T-cell (primary cell): ENCODE measurements at regions of chr1 and their contacts with region 1.

Region 1: GRCh38 chr1:35726450-35727433 is 8.1 kb upstream of the C1orf216 start:
- DNase-seq: peak in 30 of 35 experiments; percentile 12 to 81 (median 36)
- ATAC-seq: peak; percentile 85 to 90 (median 88)
- H3K4me3 ChIP-seq: no peak overlapping the region
- H3K4me3 Mint-ChIP-seq: no peak overlapping the region
- H3K27ac ChIP-seq: no peak overlapping the region
- H3K27ac Mint-ChIP-seq: no peak overlapping the region
- H3K4me1 ChIP-seq: peaks cover 0 to 7% of the 10 kb centered on the region in 2 experiments
- H3K4me1 Mint-ChIP-seq: peaks cover 4 to 7% (median 4%) of the 10 kb centered on the region in 3 donors
- H3K27me3 ChIP-seq: no peaks in the 10 kb centered on the region
- H3K27me3 Mint-ChIP-seq: no peaks in the 10 kb centered on the region

Region 2: GRCh38 chr1:35564037-35564883 is 162.5 kb before region 1 on chr1:
- CTCF ChIA-PET with region 1: interaction called, 3 to 16 read pairs
- POLR2A ChIA-PET with region 1: interaction called in 1 of 2 experiments, 4 read pairs
- DNase-seq: peak; percentile 48 to 89 (median 73)
- ATAC-seq: peak; percentile 61 to 76 (median 70)
- H3K4me3 ChIP-seq: no peak overlapping the region
- H3K4me3 Mint-ChIP-seq: peak overlapping the region in 1 of 3 donors; percentile 28
- H3K27ac ChIP-seq: no peak overlapping the region
- H3K27ac Mint-ChIP-seq: peak overlapping the region; percentile 56 to 76
- H3K4me1 ChIP-seq: peaks cover 0 to 16% of the 10 kb centered on the region in 2 experiments
- H3K4me1 Mint-ChIP-seq: peaks cover 40 to 47% (median 44%) of the 10 kb centered on the region in 3 donors
- H3K27me3 ChIP-seq: no peaks in the 10 kb centered on the region
- H3K27me3 Mint-ChIP-seq: no peaks in the 10 kb centered on the region

Region 3: GRCh38 chr1:35668506-35668905 is 58.2 kb before region 1 on chr1:
- CTCF ChIA-PET with region 1: no interaction called
- POLR2A ChIA-PET with region 1: no interaction called
- DNase-seq: no peak
- ATAC-seq: no peak
- H3K4me3 ChIP-seq: no peak overlapping the region
- H3K4me3 Mint-ChIP-seq: no peak overlapping the region
- H3K27ac ChIP-seq: no peak overlapping the region
- H3K27ac Mint-ChIP-seq: no peak overlapping the region
- H3K4me1 ChIP-seq: no peaks in the 10 kb centered on the region
- H3K4me1 Mint-ChIP-seq: no peaks in the 10 kb centered on the region
- H3K27me3 ChIP-seq: peaks cover 8 to 41% of the 10 kb centered on the region in 2 experiments
- H3K27me3 Mint-ChIP-seq: peaks cover 11 to 29% of the 10 kb centered on the region in 2 donors

Region 4: GRCh38 chr1:35715568-35716002 is 11.2 kb before region 1 on chr1:
- CTCF ChIA-PET with region 1: interaction called, 11 to 14 read pairs
- POLR2A ChIA-PET with region 1: no interaction called
- DNase-seq: peak; percentile 49 to 86 (median 71)
- ATAC-seq: peak; percentile 53 to 63 (median 56)
- H3K4me3 ChIP-seq: no peak overlapping the region
- H3K4me3 Mint-ChIP-seq: peak overlapping the region in 1 of 3 donors; percentile 39
- H3K27ac ChIP-seq: no peak overlapping the region
- H3K27ac Mint-ChIP-seq: no peak overlapping the region
- H3K4me1 ChIP-seq: peaks cover 3 to 40% of the 10 kb centered on the region in 2 experiments
- H3K4me1 Mint-ChIP-seq: peaks cover 31 to 42% (median 32%) of the 10 kb centered on the region in 3 donors
- H3K27me3 ChIP-seq: peaks cover 0 to 3% of the 10 kb centered on the region in 2 experiments
- H3K27me3 Mint-ChIP-seq: no peaks in the 10 kb centered on the region

Region 5: DNA sequence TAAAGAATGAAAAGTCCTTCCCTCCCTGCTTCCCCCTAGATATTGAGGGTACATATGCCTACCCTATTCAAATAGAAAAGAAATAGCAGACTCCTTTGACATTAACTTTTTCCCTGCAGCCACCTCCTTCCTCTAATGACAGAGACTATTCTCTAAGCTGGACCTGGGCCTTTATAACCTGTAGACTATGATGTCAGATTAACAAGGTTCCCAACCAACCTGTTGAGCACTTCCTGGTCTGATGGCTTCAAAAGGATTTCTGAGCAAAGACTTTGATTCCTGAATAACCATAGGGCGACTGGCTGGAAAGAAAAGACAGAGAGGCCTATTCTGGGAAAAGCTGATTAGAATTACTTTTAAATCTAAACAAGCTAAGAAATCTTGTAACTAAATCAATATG is 10.4 kb after region 1 on chr1:
- CTCF ChIA-PET with region 1: interaction called in 1 of 2 experiments, 10 read pairs
- POLR2A ChIA-PET with region 1: no interaction called
- DNase-seq: no peak
- ATAC-seq: no peak
- H3K4me3 ChIP-seq: no peak overlapping the region
- H3K4me3 Mint-ChIP-seq: no peak overlapping the region
- H3K27ac ChIP-seq: no peak overlapping the region
- H3K27ac Mint-ChIP-seq: peak overlapping the region in 1 of 2 donors; percentile 23
- H3K4me1 ChIP-seq: no peaks in the 10 kb centered on the region
- H3K4me1 Mint-ChIP-seq: peaks cover 0 to 2% (median 0%) of the 10 kb centered on the region in 3 donors
- H3K27me3 ChIP-seq: no peaks in the 10 kb centered on the region
- H3K27me3 Mint-ChIP-seq: no peaks in the 10 kb centered on the region